Ovary (tissue), 10 donors: ENCODE measurements at regions of chr14 and their contacts with region 1.

Region 1: GRCh38 chr14:90758028-90758889 is 58.0 kb downstream of the TTC7B start:
- DNase-seq: peak; percentile 90 to 96 (median 94)
- H3K4me3 ChIP-seq: peak overlapping the region; percentile 42
- H3K27ac ChIP-seq: peak overlapping the region; percentile 68 to 81
- H3K4me1 ChIP-seq: peaks cover 7% of the 10 kb centered on the region
- H3K27me3 ChIP-seq: no peaks in the 10 kb centered on the region
- CTCF ChIP-seq: peak; percentile 91 to 97 (median 93)
- EP300 ChIP-seq: no peak
- POLR2A ChIP-seq: peak; percentile 53

Region 2: GRCh38 chr14:90295870-90296516 is 462.3 kb before region 1 on chr14:
- intact Hi-C with region 1: loop called in 2 of 4 experiments (anchors 10 kb)
- DNase-seq: no peak
- H3K4me3 ChIP-seq: no peak overlapping the region
- H3K27ac ChIP-seq: no peak overlapping the region
- H3K4me1 ChIP-seq: no peaks in the 10 kb centered on the region
- H3K27me3 ChIP-seq: no peaks in the 10 kb centered on the region
- CTCF ChIP-seq: no peak
- EP300 ChIP-seq: no peak
- POLR2A ChIP-seq: no peak

Region 3: DNA sequence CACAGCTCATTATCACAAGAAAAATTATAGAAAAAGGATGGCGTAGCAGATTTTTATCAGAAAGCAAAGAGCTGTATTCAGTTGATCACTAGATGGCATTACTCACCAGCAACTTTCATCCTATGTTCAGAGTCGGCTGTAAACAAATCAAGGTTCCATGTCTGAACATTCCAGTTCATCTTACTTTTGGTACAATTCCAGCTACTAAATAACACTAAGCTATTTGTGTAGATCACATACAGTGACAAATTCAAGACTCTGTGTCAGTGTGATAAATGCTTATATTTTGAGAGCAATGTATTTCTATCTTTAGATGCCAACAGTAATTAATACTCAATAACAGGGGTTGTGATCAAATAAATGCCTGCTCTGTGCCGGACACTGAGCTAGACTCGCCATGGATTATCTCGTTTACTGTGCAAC is 456.6 kb before region 1 on chr14:
- intact Hi-C with region 1: loop called in 2 of 4 experiments (anchors 10 kb)
- DNase-seq: no peak
- H3K4me3 ChIP-seq: no peak overlapping the region
- H3K27ac ChIP-seq: peak overlapping the region in 1 of 2 donors; percentile 30
- H3K4me1 ChIP-seq: peaks cover 7% of the 10 kb centered on the region
- H3K27me3 ChIP-seq: no peaks in the 10 kb centered on the region
- CTCF ChIP-seq: peak in 2 of 3 donors; percentile 32 to 35
- EP300 ChIP-seq: no peak
- POLR2A ChIP-seq: no peak